Motor neuron (in vitro differentiated cells): ENCODE measurements at regions of chr7 and their contacts with region 1.

Region 1: GRCh38 chr7:137454246-137454724 is 110.8 kb upstream of the PTN start:
- ATAC-seq: peak in 5 of 8 experiments; percentile 39 to 66 (median 44)
- H3K4me3 ChIP-seq: no peak overlapping the region
- H3K27ac ChIP-seq: no peak overlapping the region
- H3K4me1 ChIP-seq: no peaks in the 10 kb centered on the region

Region 2: GRCh38 chr7:137169282-137169698 is 285.0 kb before region 1 on chr7:
- in situ Hi-C with region 1: loop called in 2 of 9 experiments (anchors 25 kb)
- ATAC-seq: peak; percentile 32 to 88 (median 62)
- H3K4me3 ChIP-seq: no peak overlapping the region
- H3K27ac ChIP-seq: no peak overlapping the region
- H3K4me1 ChIP-seq: peaks cover 0 to 9% of the 10 kb centered on the region in 2 donors

Region 3: GRCh38 chr7:137231950-137232349 is 222.3 kb before region 1 on chr7:
- in situ Hi-C with region 1: no loop called
- ATAC-seq: no peak
- H3K4me3 ChIP-seq: no peak overlapping the region
- H3K27ac ChIP-seq: no peak overlapping the region
- H3K4me1 ChIP-seq: no peaks in the 10 kb centered on the region

Region 4: GRCh38 chr7:137287651-137288258 is 166.5 kb before region 1 on chr7:
- in situ Hi-C with region 1: loop called in 1 of 9 experiments (anchors 25 kb)
- ATAC-seq: no peak
- H3K4me3 ChIP-seq: no peak overlapping the region
- H3K27ac ChIP-seq: no peak overlapping the region
- H3K4me1 ChIP-seq: no peaks in the 10 kb centered on the region

Region 5: GRCh38 chr7:137381045-137381444 is 73.2 kb before region 1 on chr7:
- in situ Hi-C with region 1: no loop called
- ATAC-seq: no peak
- H3K4me3 ChIP-seq: no peak overlapping the region
- H3K27ac ChIP-seq: no peak overlapping the region
- H3K4me1 ChIP-seq: no peaks in the 10 kb centered on the region